ENCODE measurements at regions of chr11 and their contacts with region 1.

Region 1: DNA sequence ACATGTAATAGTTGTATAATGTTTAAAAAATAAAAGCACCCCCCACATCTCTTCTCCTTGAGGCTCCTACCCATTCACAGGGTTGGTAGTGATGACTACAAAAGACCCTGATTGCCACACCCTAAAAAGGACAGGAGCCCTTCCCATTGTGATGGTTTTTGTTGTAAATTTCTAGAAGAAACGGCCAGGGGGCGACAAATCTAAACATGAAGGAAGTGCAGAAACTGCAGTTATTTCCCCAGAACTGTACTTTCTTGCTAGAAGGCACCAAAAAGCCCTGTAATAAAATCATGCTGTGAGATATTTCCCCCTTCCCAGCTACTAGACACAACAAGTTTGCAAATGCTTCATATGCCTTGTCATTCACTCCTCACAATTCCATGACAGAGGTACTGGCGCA is 10.8 kb downstream of the PRR5L start:
- DNase-seq: peak; percentile 36
- ATAC-seq: peak; percentile 36; the same call in 2 of the 3 replicates
- H3K4me3 ChIP-seq: no peak overlapping the region
- H3K27ac ChIP-seq: no peak overlapping the region
- H3K4me1 ChIP-seq: no peaks in the 10 kb centered on the region
- H3K27me3 ChIP-seq: no peaks in the 10 kb centered on the region
- CTCF ChIP-seq: peak; percentile 45; the same call in 1 of the 2 replicates
- EP300 ChIP-seq: no peak
- POLR2A ChIP-seq: no peak
- RAD21 ChIP-seq: no peak

Region 2: GRCh38 chr11:36478700-36479329 is 171.9 kb after region 1 on chr11:
- CTCF ChIA-PET with region 1: interaction called, 13 read pairs
- POLR2A ChIA-PET with region 1: no interaction called
- in situ Hi-C with region 1: loop called (anchors 10 kb)
- intact Hi-C with region 1: loop called (anchors 1 kb)
- DNase-seq: peak; percentile 39
- ATAC-seq: peak; percentile 76
- H3K4me3 ChIP-seq: no peak overlapping the region
- H3K27ac ChIP-seq: no peak overlapping the region
- H3K4me1 ChIP-seq: no peaks in the 10 kb centered on the region
- H3K27me3 ChIP-seq: no peaks in the 10 kb centered on the region
- CTCF ChIP-seq: peak; percentile 61
- EP300 ChIP-seq: no peak
- POLR2A ChIP-seq: no peak
- RAD21 ChIP-seq: no peak

Region 3: GRCh38 chr11:36492724-36493304 is 185.9 kb after region 1 on chr11:
- CTCF ChIA-PET with region 1: interaction called, 18 read pairs
- POLR2A ChIA-PET with region 1: no interaction called
- in situ Hi-C with region 1: no loop called
- intact Hi-C with region 1: loop called (anchors 1 kb)
- DNase-seq: peak; percentile 35
- ATAC-seq: peak; percentile 66; the same call in 2 of the 3 replicates
- H3K4me3 ChIP-seq: no peak overlapping the region
- H3K27ac ChIP-seq: no peak overlapping the region
- H3K4me1 ChIP-seq: no peaks in the 10 kb centered on the region
- H3K27me3 ChIP-seq: no peaks in the 10 kb centered on the region
- CTCF ChIP-seq: peak; percentile 71
- EP300 ChIP-seq: no peak
- POLR2A ChIP-seq: no peak
- RAD21 ChIP-seq: no peak

Region 4: GRCh38 chr11:36874291-36874690 is 567.4 kb after region 1 on chr11:
- CTCF ChIA-PET with region 1: no interaction called
- POLR2A ChIA-PET with region 1: no interaction called
- in situ Hi-C with region 1: no loop called
- intact Hi-C with region 1: no loop called
- DNase-seq: no peak
- ATAC-seq: no peak
- H3K4me3 ChIP-seq: no peak overlapping the region
- H3K27ac ChIP-seq: no peak overlapping the region
- H3K4me1 ChIP-seq: no peaks in the 10 kb centered on the region
- H3K27me3 ChIP-seq: no peaks in the 10 kb centered on the region
- CTCF ChIP-seq: no peak
- EP300 ChIP-seq: no peak
- POLR2A ChIP-seq: no peak
- RAD21 ChIP-seq: no peak

Measured in HepG2 (cell line).